CD4-positive, alpha-beta memory T cell (primary cell): ENCODE measurements at regions of chr17 and their contacts with region 1.

Region 1: GRCh38 chr17:17108451-17109049 is 66.3 kb downstream of the MPRIP start:
- DNase-seq: no peak
- H3K4me3 ChIP-seq: no peak overlapping the region
- H3K4me3 Mint-ChIP-seq: peak overlapping the region in 3 of 8 donors; percentile 27 to 73 (median 66)
- H3K27ac ChIP-seq: peak overlapping the region; percentile 46
- H3K27ac Mint-ChIP-seq: peak overlapping the region; percentile 89 to 95 (median 93)
- H3K4me1 ChIP-seq: peaks cover 69% of the 10 kb centered on the region
- H3K4me1 Mint-ChIP-seq: peaks cover 54 to 94% (median 67%) of the 10 kb centered on the region in 4 donors
- H3K27me3 ChIP-seq: no peaks in the 10 kb centered on the region
- H3K27me3 Mint-ChIP-seq: no peaks in the 10 kb centered on the region

Region 2: GRCh38 chr17:16926571-16927451 is 181.7 kb before region 1 on chr17:
- CTCF ChIA-PET with region 1: no interaction called
- POLR2A ChIA-PET with region 1: no interaction called
- intact Hi-C with region 1: no loop called
- DNase-seq: peak in 1 of 5 donors; percentile 19
- H3K4me3 ChIP-seq: no peak overlapping the region
- H3K4me3 Mint-ChIP-seq: no peak overlapping the region
- H3K27ac ChIP-seq: no peak overlapping the region
- H3K27ac Mint-ChIP-seq: no peak overlapping the region
- H3K4me1 ChIP-seq: no peaks in the 10 kb centered on the region
- H3K4me1 Mint-ChIP-seq: peaks cover 0 to 2% (median 0%) of the 10 kb centered on the region in 4 donors
- H3K27me3 ChIP-seq: no peaks in the 10 kb centered on the region
- H3K27me3 Mint-ChIP-seq: no peaks in the 10 kb centered on the region

Region 3: GRCh38 chr17:17119533-17119932 is 11.0 kb after region 1 on chr17:
- CTCF ChIA-PET with region 1: interaction called, 7 read pairs
- POLR2A ChIA-PET with region 1: interaction called, 57 read pairs
- intact Hi-C with region 1: no loop called
- DNase-seq: peak; percentile 69 to 93 (median 81)
- H3K4me3 ChIP-seq: no peak overlapping the region
- H3K4me3 Mint-ChIP-seq: peak overlapping the region; percentile 10 to 79 (median 66)
- H3K27ac ChIP-seq: peak overlapping the region; percentile 66
- H3K27ac Mint-ChIP-seq: peak overlapping the region; percentile 93 to 96 (median 95)
- H3K4me1 ChIP-seq: peaks cover 93% of the 10 kb centered on the region
- H3K4me1 Mint-ChIP-seq: peaks cover 62 to 95% (median 84%) of the 10 kb centered on the region in 4 donors
- H3K27me3 ChIP-seq: no peaks in the 10 kb centered on the region
- H3K27me3 Mint-ChIP-seq: no peaks in the 10 kb centered on the region

Region 4: GRCh38 chr17:17125136-17126084 is 16.9 kb after region 1 on chr17:
- CTCF ChIA-PET with region 1: interaction called, 11 read pairs
- POLR2A ChIA-PET with region 1: interaction called, 57 read pairs
- intact Hi-C with region 1: no loop called
- DNase-seq: peak; percentile 50 to 75 (median 66)
- H3K4me3 ChIP-seq: peak overlapping the region; percentile 20 to 44
- H3K4me3 Mint-ChIP-seq: peak overlapping the region; percentile 74 to 89 (median 82)
- H3K27ac ChIP-seq: peak overlapping the region; percentile 53
- H3K27ac Mint-ChIP-seq: peak overlapping the region; percentile 88 to 97 (median 93)
- H3K4me1 ChIP-seq: peaks cover 88% of the 10 kb centered on the region
- H3K4me1 Mint-ChIP-seq: peaks cover 53 to 88% (median 75%) of the 10 kb centered on the region in 4 donors
- H3K27me3 ChIP-seq: no peaks in the 10 kb centered on the region
- H3K27me3 Mint-ChIP-seq: no peaks in the 10 kb centered on the region

Region 5: GRCh38 chr17:17313350-17313991 is 204.9 kb after region 1 on chr17:
- CTCF ChIA-PET with region 1: interaction called, 4 read pairs
- POLR2A ChIA-PET with region 1: no interaction called
- intact Hi-C with region 1: loop called (anchors 1 kb)
- DNase-seq: peak; percentile 71 to 77 (median 76)
- H3K4me3 ChIP-seq: no peak overlapping the region
- H3K4me3 Mint-ChIP-seq: peak overlapping the region in 1 of 8 donors; percentile 15
- H3K27ac ChIP-seq: no peak overlapping the region
- H3K27ac Mint-ChIP-seq: peak overlapping the region in 3 of 7 donors; percentile 66 to 70 (median 67)
- H3K4me1 ChIP-seq: peaks cover 3% of the 10 kb centered on the region
- H3K4me1 Mint-ChIP-seq: peaks cover 4 to 7% (median 6%) of the 10 kb centered on the region in 4 donors
- H3K27me3 ChIP-seq: no peaks in the 10 kb centered on the region
- H3K27me3 Mint-ChIP-seq: no peaks in the 10 kb centered on the region